Stomach (tissue), 19 donors: ENCODE measurements at regions of chr19 and their contacts with region 1.

Region 1: GRCh38 chr19:58009666-58010371 is 7.2 kb upstream of the ZNF606 start:
- DNase-seq: peak; percentile 72 to 98
- H3K4me3 ChIP-seq: peak overlapping the region; percentile 9 to 45 (median 28)
- H3K27ac ChIP-seq: peak overlapping the region in 3 of 5 donors; percentile 13 to 71 (median 46)
- H3K4me1 ChIP-seq: peaks cover 0 to 20% (median 8%) of the 10 kb centered on the region in 4 donors
- H3K27me3 ChIP-seq: no peaks in the 10 kb centered on the region
- CTCF ChIP-seq: no peak
- EP300 ChIP-seq: no peak
- POLR2A ChIP-seq: no peak

Region 2: GRCh38 chr19:58154679-58155648 is 145.1 kb after region 1 on chr19:
- intact Hi-C with region 1: loop called (anchors 10 kb)
- DNase-seq: peak; percentile 98 to 99
- H3K4me3 ChIP-seq: peak overlapping the region; percentile 73 to 99 (median 80)
- H3K27ac ChIP-seq: peak overlapping the region; percentile 86 to 94 (median 91)
- H3K4me1 ChIP-seq: peaks cover 16 to 47% (median 37%) of the 10 kb centered on the region in 4 donors
- H3K27me3 ChIP-seq: no peaks in the 10 kb centered on the region
- CTCF ChIP-seq: peak in 6 of 7 experiments; percentile 21 to 99 (median 97)
- EP300 ChIP-seq: no peak
- POLR2A ChIP-seq: no peak